H1 (cell line): ENCODE measurements at regions of chr3 and their contacts with region 1.

Region 1: GRCh38 chr3:28637742-28638141 is 289.1 kb upstream of the AZI2 start:
- DNase-seq: no peak
- H3K4me3 ChIP-seq: no peak overlapping the region
- H3K27ac ChIP-seq: no peak overlapping the region
- H3K4me1 ChIP-seq: no peaks in the 10 kb centered on the region; a peak in 1 of 7 replicates
- H3K27me3 ChIP-seq: no peaks in the 10 kb centered on the region
- CTCF ChIP-seq: no peak
- EP300 ChIP-seq: no peak
- POLR2A ChIP-seq: no peak
- RAD21 ChIP-seq: no peak

Region 2: DNA sequence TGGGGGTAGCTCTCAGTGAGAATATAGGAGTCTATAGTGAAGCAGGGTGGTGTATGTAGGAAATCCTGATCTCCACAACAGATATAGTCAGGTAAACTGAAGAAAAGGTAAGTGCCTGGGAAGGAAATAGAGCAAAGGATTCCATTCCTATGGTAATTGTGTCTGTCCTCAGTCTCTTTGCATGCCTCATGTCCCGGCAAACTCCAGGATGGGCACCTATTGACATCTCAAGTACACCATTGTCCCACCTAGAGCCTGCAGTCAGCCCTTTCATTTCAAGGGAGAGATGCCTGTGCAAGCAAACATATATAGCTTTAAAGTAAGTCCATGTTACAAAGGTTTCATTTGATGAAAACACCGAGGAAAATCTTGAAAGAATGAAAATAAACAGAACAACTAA is 31.5 kb before region 1 on chr3:
- CTCF ChIA-PET with region 1: no interaction called
- POLR2A ChIA-PET with region 1: no interaction called
- DNase-seq: no peak
- H3K4me3 ChIP-seq: no peak overlapping the region
- H3K27ac ChIP-seq: no peak overlapping the region
- H3K4me1 ChIP-seq: no peaks in the 10 kb centered on the region; a peak in 1 of 7 replicates
- H3K27me3 ChIP-seq: no peaks in the 10 kb centered on the region
- CTCF ChIP-seq: no peak
- EP300 ChIP-seq: no peak
- POLR2A ChIP-seq: no peak
- RAD21 ChIP-seq: no peak

Region 3: GRCh38 chr3:28617821-28618220 is 19.9 kb before region 1 on chr3:
- CTCF ChIA-PET with region 1: interaction called, 10 read pairs
- POLR2A ChIA-PET with region 1: no interaction called
- DNase-seq: no peak
- H3K4me3 ChIP-seq: no peak overlapping the region
- H3K27ac ChIP-seq: no peak overlapping the region
- H3K4me1 ChIP-seq: no peaks in the 10 kb centered on the region
- H3K27me3 ChIP-seq: no peaks in the 10 kb centered on the region
- CTCF ChIP-seq: no peak
- EP300 ChIP-seq: no peak
- POLR2A ChIP-seq: no peak
- RAD21 ChIP-seq: no peak